ENCODE measurements at regions of chr7 and their contacts with region 1.

Region 1: GRCh38 chr7:131501422-131501821 is 55.0 kb downstream of the PODXL start:
- DNase-seq: peak; percentile 81
- ATAC-seq: peak; percentile 96
- H3K4me3 Mint-ChIP-seq: peak overlapping the region; percentile 35
- H3K27ac Mint-ChIP-seq: peak overlapping the region; percentile 65
- H3K4me1 Mint-ChIP-seq: peaks cover 27% of the 10 kb centered on the region
- H3K27me3 Mint-ChIP-seq: no peaks in the 10 kb centered on the region

Region 2: GRCh38 chr7:131466735-131467365 is 34.6 kb before region 1 on chr7:
- CTCF ChIA-PET with region 1: no interaction called
- POLR2A ChIA-PET with region 1: no interaction called
- DNase-seq: no peak
- ATAC-seq: no peak
- H3K4me3 Mint-ChIP-seq: no peak overlapping the region
- H3K27ac Mint-ChIP-seq: no peak overlapping the region
- H3K4me1 Mint-ChIP-seq: no peaks in the 10 kb centered on the region
- H3K27me3 Mint-ChIP-seq: no peaks in the 10 kb centered on the region

Region 3: GRCh38 chr7:131488361-131488760 is 13.1 kb before region 1 on chr7:
- CTCF ChIA-PET with region 1: interaction called, 10 read pairs
- POLR2A ChIA-PET with region 1: no interaction called
- DNase-seq: no peak
- ATAC-seq: no peak
- H3K4me3 Mint-ChIP-seq: no peak overlapping the region
- H3K27ac Mint-ChIP-seq: no peak overlapping the region
- H3K4me1 Mint-ChIP-seq: no peaks in the 10 kb centered on the region
- H3K27me3 Mint-ChIP-seq: no peaks in the 10 kb centered on the region

Region 4: DNA sequence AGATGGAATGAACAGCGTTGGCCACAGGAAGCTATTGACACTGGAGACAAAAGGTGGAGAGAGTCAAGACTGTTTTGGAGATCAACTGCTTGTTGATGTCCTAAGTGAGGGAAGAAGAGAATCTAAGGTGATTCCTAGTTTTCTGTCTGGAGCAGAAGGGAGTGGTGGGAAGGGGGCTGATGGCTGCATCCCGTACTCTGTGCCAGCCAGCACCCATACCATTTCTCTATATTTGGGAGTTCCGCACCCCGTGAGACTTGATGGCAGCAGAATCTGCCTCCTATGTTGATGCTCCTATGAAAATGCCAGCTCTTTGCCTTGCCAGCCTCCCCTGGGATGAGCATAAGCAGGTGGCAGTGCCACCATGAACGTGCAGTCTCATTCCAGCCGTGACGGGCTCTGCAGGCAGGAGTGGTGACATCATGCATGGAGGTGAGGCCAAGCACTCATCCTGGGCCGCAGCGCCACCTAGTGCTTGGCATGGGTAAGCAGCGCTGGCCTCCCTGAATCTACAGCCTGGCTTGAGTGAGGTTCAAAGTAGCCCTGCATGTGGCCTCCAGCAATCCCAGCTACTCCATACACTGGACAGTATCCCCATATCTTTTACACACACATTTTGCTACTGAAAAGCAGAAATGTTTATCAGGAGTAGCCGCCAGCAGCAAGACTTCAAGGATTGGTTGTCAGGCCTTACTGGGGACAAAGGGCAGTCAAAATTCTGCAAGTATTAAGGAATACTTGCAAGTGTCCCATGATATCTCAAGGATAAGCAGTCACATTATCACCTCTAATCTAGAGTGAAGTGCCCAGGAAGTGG is 12.0 kb after region 1 on chr7:
- CTCF ChIA-PET with region 1: interaction called, 14 read pairs
- POLR2A ChIA-PET with region 1: interaction called, 4 read pairs
- DNase-seq: peak; percentile 84
- ATAC-seq: peak; percentile 97
- H3K4me3 Mint-ChIP-seq: peak overlapping the region; percentile 19
- H3K27ac Mint-ChIP-seq: peak overlapping the region; percentile 40
- H3K4me1 Mint-ChIP-seq: peaks cover 23% of the 10 kb centered on the region
- H3K27me3 Mint-ChIP-seq: peaks cover 9% of the 10 kb centered on the region